OCI-LY7 (cell line): ENCODE measurements at regions of chr1 and their contacts with region 1.

Region 1: GRCh38 chr1:156129706-156130581 is 15.4 kb downstream of the LMNA start:
- DNase-seq: peak; percentile 75
- H3K4me3 ChIP-seq: no peak overlapping the region
- H3K27ac ChIP-seq: no peak overlapping the region
- H3K4me1 ChIP-seq: peaks cover 27% of the 10 kb centered on the region
- CTCF ChIP-seq: peak; percentile 94

Region 2: GRCh38 chr1:155940531-155940992 is 189.4 kb before region 1 on chr1:
- CTCF ChIA-PET with region 1: no interaction called
- POLR2A ChIA-PET with region 1: no interaction called
- intact Hi-C with region 1: no loop called
- DNase-seq: no peak
- H3K4me3 ChIP-seq: peak overlapping the region; percentile 11
- H3K27ac ChIP-seq: peak overlapping the region; percentile 75
- H3K4me1 ChIP-seq: peaks cover 69% of the 10 kb centered on the region
- CTCF ChIP-seq: no peak

Region 3: GRCh38 chr1:156090822-156091188 is 39.1 kb before region 1 on chr1:
- CTCF ChIA-PET with region 1: interaction called, 13 read pairs
- POLR2A ChIA-PET with region 1: interaction called, 4 read pairs
- intact Hi-C with region 1: loop called (anchors 1 kb)
- DNase-seq: peak; percentile 89
- H3K4me3 ChIP-seq: no peak overlapping the region
- H3K27ac ChIP-seq: no peak overlapping the region
- H3K4me1 ChIP-seq: peaks cover 16% of the 10 kb centered on the region
- CTCF ChIP-seq: peak; percentile 97

Region 4: GRCh38 chr1:156096640-156097391 is 33.1 kb before region 1 on chr1:
- CTCF ChIA-PET with region 1: interaction called, 13 read pairs
- POLR2A ChIA-PET with region 1: interaction called, 3 read pairs
- intact Hi-C with region 1: loop called (anchors 1 kb)
- DNase-seq: peak; percentile 82
- H3K4me3 ChIP-seq: no peak overlapping the region
- H3K27ac ChIP-seq: no peak overlapping the region
- H3K4me1 ChIP-seq: peaks cover 18% of the 10 kb centered on the region
- CTCF ChIP-seq: peak; percentile 99

Region 5: GRCh38 chr1:156112276-156113137 is 17.4 kb before region 1 on chr1:
- CTCF ChIA-PET with region 1: no interaction called
- POLR2A ChIA-PET with region 1: no interaction called
- intact Hi-C with region 1: no loop called
- DNase-seq: no peak
- H3K4me3 ChIP-seq: no peak overlapping the region
- H3K27ac ChIP-seq: no peak overlapping the region
- H3K4me1 ChIP-seq: no peaks in the 10 kb centered on the region
- CTCF ChIP-seq: no peak

Region 6: GRCh38 chr1:156338180-156338973 is 208.4 kb after region 1 on chr1 and contains the starts of genes CCT3 and TSACC:
- CTCF ChIA-PET with region 1: no interaction called
- POLR2A ChIA-PET with region 1: no interaction called
- intact Hi-C with region 1: no loop called
- DNase-seq: peak; percentile 99
- H3K4me3 ChIP-seq: peak within 1 kb of the TSS; percentile 98
- H3K27ac ChIP-seq: peak within 1 kb of the TSS; percentile 83
- H3K4me1 ChIP-seq: peaks cover 26% of the 10 kb centered on the region
- CTCF ChIP-seq: no peak
- total RNA-seq, gene CCT3: 385 and 407 TPM in 2 replicates
- total RNA-seq, gene TSACC: 2.3 TPM in 1 of 2 replicates, not detected in the other

Region 7: GRCh38 chr1:156445789-156446263 is 315.9 kb after region 1 on chr1:
- CTCF ChIA-PET with region 1: no interaction called
- POLR2A ChIA-PET with region 1: no interaction called
- intact Hi-C with region 1: loop called (anchors 10 kb)
- DNase-seq: peak; percentile 74
- H3K4me3 ChIP-seq: no peak overlapping the region
- H3K27ac ChIP-seq: no peak overlapping the region
- H3K4me1 ChIP-seq: peaks cover 6% of the 10 kb centered on the region
- CTCF ChIP-seq: peak; percentile 98

Region 8: GRCh38 chr1:156860113-156860627 is 730.2 kb after region 1 on chr1:
- CTCF ChIA-PET with region 1: no interaction called
- POLR2A ChIA-PET with region 1: no interaction called
- intact Hi-C with region 1: no loop called
- DNase-seq: peak; percentile 63
- H3K4me3 ChIP-seq: peak overlapping the region; percentile 11
- H3K27ac ChIP-seq: no peak overlapping the region
- H3K4me1 ChIP-seq: peaks cover 4% of the 10 kb centered on the region
- CTCF ChIP-seq: peak; percentile 83